Activated CD8-positive, alpha-beta T cell treated with anti-CD3 and anti-CD28 coated beads for 36 hours (primary cell): ENCODE measurements at regions of chr6 and their contacts with region 1.

Region 1: DNA sequence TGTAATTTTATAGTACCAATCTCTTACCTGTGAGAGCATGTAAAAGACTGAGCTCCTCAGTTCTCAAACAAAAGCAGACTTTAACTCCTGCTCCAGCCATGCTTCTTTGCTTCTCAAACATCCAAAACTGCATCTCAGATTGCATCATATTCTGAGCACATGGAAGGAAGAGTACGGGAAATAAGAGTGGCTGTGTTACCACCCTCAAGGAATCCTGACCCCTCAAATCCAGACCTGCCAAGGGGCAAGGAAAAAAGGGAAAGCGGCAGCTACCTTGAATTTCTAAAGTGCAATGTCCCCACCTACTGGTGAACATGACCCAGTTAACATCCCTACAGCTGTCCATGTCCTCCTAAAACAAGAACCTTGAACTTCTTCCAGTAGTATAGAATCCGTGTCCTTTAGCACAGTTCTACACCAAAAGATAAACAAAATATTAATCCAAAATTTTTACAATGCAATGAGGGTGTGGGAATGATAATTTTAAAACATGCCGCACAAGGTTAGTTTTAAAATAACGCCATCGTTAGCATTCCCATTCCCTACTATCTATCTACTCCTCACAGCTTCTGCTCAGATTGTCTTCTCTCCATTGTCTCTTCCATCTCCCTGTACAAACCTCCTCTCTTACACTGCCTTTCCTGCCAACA is 34.1 kb upstream of the HLA-DQB1 start:
- DNase-seq: peak; percentile 22
- ATAC-seq: peak; percentile 42
- H3K4me3 Mint-ChIP-seq: no peak overlapping the region
- H3K27ac Mint-ChIP-seq: no peak overlapping the region
- H3K4me1 Mint-ChIP-seq: no peaks in the 10 kb centered on the region
- H3K27me3 Mint-ChIP-seq: peaks cover 30% of the 10 kb centered on the region
- CTCF ChIP-seq: peak; percentile 89

Region 2: DNA sequence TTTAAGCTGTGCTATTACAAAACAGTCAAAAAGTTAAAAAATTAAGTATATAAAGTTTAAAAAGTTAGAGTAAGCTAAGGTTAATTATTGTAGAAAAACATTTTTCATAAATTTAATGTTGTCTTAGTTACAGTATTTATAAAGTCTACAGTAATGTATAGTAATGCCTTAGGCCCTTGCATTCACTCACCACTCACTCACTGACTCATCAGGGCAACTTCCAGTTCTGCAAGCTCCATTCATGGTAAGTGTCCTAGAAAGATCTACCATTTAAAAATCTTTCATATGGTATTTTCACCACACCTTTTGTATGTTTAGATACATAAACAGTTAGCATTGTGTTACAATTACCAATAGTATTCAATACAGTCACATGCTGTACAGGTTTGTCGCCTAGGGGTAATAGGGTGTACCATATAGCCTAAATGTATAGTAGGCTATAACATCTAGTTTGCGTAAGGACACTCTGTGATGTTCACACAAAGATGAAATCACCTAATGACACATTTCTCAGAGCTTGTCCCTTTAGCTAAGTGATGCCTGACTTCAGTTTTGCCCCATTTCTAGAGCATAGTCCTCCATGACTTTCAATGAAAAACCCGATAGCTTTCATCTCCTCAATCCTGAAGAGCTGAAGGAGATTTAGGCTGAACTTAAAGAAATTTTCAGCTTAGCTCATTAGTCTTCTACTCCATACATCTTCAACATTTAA is 275.8 kb before region 1 on chr6:
- CTCF ChIA-PET with region 1: interaction called, 14 read pairs
- POLR2A ChIA-PET with region 1: no interaction called
- intact Hi-C with region 1: no loop called
- DNase-seq: no peak
- ATAC-seq: no peak
- H3K4me3 Mint-ChIP-seq: no peak overlapping the region
- H3K27ac Mint-ChIP-seq: no peak overlapping the region
- H3K4me1 Mint-ChIP-seq: no peaks in the 10 kb centered on the region
- H3K27me3 Mint-ChIP-seq: peaks cover 11% of the 10 kb centered on the region
- CTCF ChIP-seq: no peak

Region 3: DNA sequence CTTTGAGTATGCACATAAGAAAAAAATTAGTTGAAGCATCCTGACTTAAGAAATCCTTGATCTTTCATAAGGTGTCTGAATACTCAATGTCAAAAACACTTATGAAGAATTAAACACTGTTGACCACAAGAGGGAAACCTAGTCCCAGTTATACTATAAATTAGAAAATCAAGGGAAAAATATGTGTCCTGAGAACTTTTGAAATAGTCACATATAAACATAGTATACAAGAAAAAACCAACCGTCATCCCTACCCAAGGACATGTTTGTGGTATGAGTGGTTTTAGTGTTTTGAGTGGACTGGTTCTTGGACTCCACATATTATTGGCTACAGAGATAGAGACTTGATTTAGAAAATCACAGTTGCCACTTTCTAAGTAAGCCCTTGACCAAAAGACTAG is 268.5 kb before region 1 on chr6:
- CTCF ChIA-PET with region 1: interaction called, 31 read pairs
- POLR2A ChIA-PET with region 1: no interaction called
- intact Hi-C with region 1: loop called (anchors 5 kb)
- DNase-seq: no peak
- ATAC-seq: no peak
- H3K4me3 Mint-ChIP-seq: no peak overlapping the region
- H3K27ac Mint-ChIP-seq: no peak overlapping the region
- H3K4me1 Mint-ChIP-seq: no peaks in the 10 kb centered on the region
- H3K27me3 Mint-ChIP-seq: peaks cover 2% of the 10 kb centered on the region
- CTCF ChIP-seq: peak; percentile 64

Region 4: GRCh38 chr6:32679492-32679891 is 21.0 kb before region 1 on chr6:
- CTCF ChIA-PET with region 1: no interaction called
- POLR2A ChIA-PET with region 1: no interaction called
- intact Hi-C with region 1: no loop called
- DNase-seq: no peak
- ATAC-seq: no peak
- H3K4me3 Mint-ChIP-seq: no peak overlapping the region
- H3K27ac Mint-ChIP-seq: no peak overlapping the region
- H3K4me1 Mint-ChIP-seq: peaks cover 3% of the 10 kb centered on the region
- H3K27me3 Mint-ChIP-seq: peaks cover 3% of the 10 kb centered on the region
- CTCF ChIP-seq: no peak

Region 5: GRCh38 chr6:32713241-32713640 is 12.7 kb after region 1 on chr6:
- CTCF ChIA-PET with region 1: interaction called, 20 read pairs
- POLR2A ChIA-PET with region 1: no interaction called
- intact Hi-C with region 1: no loop called
- DNase-seq: no peak
- ATAC-seq: no peak
- H3K4me3 Mint-ChIP-seq: no peak overlapping the region
- H3K27ac Mint-ChIP-seq: no peak overlapping the region
- H3K4me1 Mint-ChIP-seq: no peaks in the 10 kb centered on the region
- H3K27me3 Mint-ChIP-seq: peaks cover 2% of the 10 kb centered on the region
- CTCF ChIP-seq: no peak